ENCODE measurements at regions of chr10 and their contacts with region 1.

Region 1: DNA sequence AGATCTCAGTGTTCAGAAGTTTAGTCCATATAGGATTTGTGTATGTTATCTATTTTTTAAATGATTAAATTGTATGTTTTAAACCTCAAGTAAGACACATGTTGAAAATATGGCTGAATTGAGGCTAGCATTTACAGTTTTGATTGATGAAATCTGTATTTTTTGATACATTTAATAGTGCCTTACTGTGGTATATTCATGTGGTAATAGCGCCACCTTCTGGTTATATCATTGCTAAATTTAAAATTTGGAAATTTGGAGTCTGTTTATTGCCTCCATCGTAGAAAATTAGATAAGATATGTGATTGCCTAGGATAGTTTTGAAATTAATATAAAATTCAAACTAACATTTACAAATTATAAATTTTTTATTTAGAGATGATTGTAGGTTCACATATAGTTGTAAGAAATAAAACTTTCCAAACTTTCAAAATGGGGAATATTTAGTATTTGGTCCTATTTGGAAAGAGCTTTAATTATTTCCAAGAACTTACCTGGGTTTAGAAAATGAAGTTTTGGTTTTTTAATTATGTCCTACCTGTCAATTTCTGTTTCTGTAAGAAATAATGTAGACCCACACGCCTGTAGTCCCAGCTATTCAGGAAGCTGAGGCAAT is 19.1 kb upstream of the ARMS2 start:
- DNase-seq: no peak
- H3K4me3 ChIP-seq: no peak overlapping the region
- H3K27ac ChIP-seq: no peak overlapping the region
- H3K27me3 ChIP-seq: no peaks in the 10 kb centered on the region
- CTCF ChIP-seq: peak; percentile 57

Region 2: DNA sequence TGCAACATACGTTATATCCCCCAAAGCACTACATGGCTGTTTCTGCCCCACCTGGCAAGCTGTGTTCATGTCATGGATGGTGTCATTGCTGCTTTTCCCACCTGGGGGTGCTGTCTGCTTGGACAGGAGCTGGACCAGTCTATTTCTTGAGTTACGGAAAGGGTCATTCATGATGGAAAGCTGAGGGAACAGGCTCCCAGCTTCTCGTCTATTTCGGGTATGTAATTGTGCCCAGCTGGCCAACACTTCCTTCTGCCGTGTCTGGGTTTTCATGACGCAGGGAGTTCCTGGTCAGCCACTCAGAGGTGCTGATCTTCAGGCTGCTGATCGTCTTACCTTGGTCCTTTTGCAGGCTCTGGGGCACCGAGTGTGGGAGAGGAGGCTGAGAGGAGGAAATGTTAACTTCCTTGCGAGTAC is 155.6 kb before region 1 on chr10:
- CTCF ChIA-PET with region 1: interaction called, 22 read pairs
- POLR2A ChIA-PET with region 1: no interaction called
- DNase-seq: no peak
- H3K4me3 ChIP-seq: no peak overlapping the region
- H3K27ac ChIP-seq: no peak overlapping the region
- H3K27me3 ChIP-seq: no peaks in the 10 kb centered on the region
- CTCF ChIP-seq: peak; percentile 63

Region 3: DNA sequence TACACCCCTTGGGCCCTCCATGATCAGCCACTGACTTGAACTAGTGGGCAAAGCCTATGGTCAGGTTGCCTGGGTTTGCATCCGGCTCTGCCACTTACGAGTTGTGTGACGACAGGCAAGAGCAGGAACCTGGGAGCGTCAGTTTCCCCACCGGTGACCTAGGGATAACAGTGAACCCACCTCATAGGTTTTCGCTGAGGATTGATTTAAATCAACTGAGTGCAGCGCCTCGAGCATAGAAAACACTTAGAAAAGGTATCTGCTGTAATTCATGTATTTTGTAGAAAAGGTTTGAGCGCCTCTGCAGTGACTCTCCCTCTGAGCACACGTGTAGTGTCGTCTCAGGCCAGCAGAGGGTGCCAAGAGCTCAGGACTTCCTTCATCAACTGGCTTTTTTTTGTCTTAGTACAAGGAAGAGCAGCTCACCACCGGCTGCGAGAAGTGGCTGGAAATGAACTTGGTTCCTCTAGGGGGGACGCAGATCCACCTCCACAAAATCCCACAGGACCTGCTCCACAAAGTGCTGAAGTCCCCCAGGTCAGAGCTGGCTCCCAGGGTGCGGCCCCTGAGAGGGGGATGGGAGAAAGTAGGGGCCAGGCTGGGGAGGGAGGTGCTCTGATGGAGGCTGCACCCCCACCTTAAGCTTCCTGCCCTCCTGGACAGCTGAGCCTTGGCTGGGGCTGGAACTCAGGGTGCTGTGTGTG is 136.6 kb before region 1 on chr10:
- CTCF ChIA-PET with region 1: interaction called, 199 read pairs
- POLR2A ChIA-PET with region 1: no interaction called
- DNase-seq: peak; percentile 58
- H3K4me3 ChIP-seq: peak overlapping the region; percentile 48
- H3K27ac ChIP-seq: no peak overlapping the region
- H3K27me3 ChIP-seq: peaks cover 18% of the 10 kb centered on the region
- CTCF ChIP-seq: peak; percentile 94

Region 4: GRCh38 chr10:122307669-122308486 is 127.4 kb before region 1 on chr10:
- CTCF ChIA-PET with region 1: interaction called, 37 read pairs
- POLR2A ChIA-PET with region 1: no interaction called
- DNase-seq: peak; percentile 76
- H3K4me3 ChIP-seq: peak overlapping the region; percentile 32
- H3K27ac ChIP-seq: peak overlapping the region; percentile 83
- H3K27me3 ChIP-seq: no peaks in the 10 kb centered on the region
- CTCF ChIP-seq: no peak

Region 5: GRCh38 chr10:122342293-122343134 is 92.8 kb before region 1 on chr10:
- CTCF ChIA-PET with region 1: interaction called, 88 read pairs
- POLR2A ChIA-PET with region 1: no interaction called
- DNase-seq: peak; percentile 20
- H3K4me3 ChIP-seq: no peak overlapping the region
- H3K27ac ChIP-seq: no peak overlapping the region
- H3K27me3 ChIP-seq: peaks cover 5% of the 10 kb centered on the region
- CTCF ChIP-seq: peak; percentile 85

Region 6: DNA sequence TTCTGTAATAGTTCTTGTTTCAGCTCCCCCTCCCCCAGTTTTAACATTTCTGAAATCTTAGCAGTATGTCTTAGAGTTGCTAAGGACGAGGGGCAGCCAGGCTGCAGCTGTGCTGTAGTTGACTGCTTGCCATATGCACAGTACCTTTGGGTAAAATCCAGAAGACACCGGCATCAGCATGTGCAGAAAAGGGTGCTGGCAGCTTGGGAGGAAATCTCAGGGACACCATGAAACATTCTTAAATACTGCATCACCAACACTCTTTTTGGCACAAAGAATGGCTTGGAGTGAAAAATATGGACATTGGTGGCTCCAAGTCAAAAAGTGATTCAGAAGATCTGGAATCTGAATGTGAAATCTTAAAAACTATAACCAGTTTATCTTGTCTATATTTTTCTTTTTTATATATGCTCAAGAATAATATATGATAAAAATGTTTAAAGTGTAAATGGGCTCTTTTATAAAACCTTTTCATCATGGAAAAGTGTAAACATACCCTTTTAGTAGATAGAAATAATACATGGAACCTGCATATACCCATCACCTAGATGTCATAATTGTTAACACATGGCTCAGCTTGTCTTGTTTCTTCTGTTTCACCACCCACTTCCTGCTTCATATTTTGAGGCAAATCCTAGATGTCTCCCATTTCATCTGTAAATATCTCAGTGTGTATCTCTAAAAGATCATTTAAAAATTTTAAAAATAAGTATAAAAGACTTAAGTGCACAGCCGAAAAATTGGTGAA is 15.3 kb before region 1 on chr10:
- CTCF ChIA-PET with region 1: interaction called, 36 read pairs
- POLR2A ChIA-PET with region 1: no interaction called
- DNase-seq: peak; percentile 45
- H3K4me3 ChIP-seq: no peak overlapping the region
- H3K27ac ChIP-seq: no peak overlapping the region
- H3K27me3 ChIP-seq: no peaks in the 10 kb centered on the region
- CTCF ChIP-seq: no peak

Region 7: DNA sequence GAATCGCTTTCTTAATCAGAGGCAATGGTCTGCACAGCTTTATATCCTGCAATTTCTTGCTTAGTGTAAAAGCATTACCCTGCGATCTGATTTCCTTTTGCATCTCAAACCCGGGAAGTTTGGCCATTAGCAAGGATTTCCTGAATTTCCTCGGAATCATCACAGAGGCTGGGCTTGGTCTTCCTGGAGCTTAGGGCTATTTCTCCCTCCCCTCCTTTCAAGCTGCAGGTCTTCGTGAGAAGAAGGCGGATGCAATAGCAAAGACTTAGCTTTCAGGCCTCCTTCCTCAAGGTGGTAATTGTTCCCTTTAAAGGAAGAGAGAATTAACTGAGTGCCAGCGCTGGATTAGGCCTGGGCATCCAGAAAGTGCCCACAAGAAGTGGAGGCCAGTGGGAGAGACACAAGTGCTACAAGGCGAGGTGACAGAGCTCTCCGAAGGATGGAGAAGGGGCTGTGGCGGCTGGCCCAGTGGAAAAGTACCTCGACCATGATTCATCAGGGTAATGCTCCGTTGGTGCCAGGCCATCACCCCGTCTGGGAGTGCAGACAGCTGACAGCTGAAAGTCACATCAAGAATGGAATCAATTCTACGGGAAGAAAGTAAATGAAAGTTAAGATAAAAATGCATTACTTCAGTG is 15.2 kb after region 1 on chr10:
- CTCF ChIA-PET with region 1: interaction called, 15 read pairs
- POLR2A ChIA-PET with region 1: no interaction called
- DNase-seq: no peak
- H3K4me3 ChIP-seq: no peak overlapping the region
- H3K27ac ChIP-seq: no peak overlapping the region
- H3K27me3 ChIP-seq: no peaks in the 10 kb centered on the region
- CTCF ChIP-seq: no peak

Measured in AG04450 (cell line).